ENCODE measurements at regions of chrX and their contacts with region 1.

Region 1: GRCh38 chrX:110146521-110146920 is 143.6 kb downstream of the TMEM164 start:
- DNase-seq: peak; percentile 42
- H3K4me3 ChIP-seq: no peak overlapping the region
- H3K27ac ChIP-seq: no peak overlapping the region
- H3K4me1 ChIP-seq: peaks cover 28% of the 10 kb centered on the region
- H3K27me3 ChIP-seq: no peaks in the 10 kb centered on the region
- CTCF ChIP-seq: peak; percentile 73 to 79

Region 2: DNA sequence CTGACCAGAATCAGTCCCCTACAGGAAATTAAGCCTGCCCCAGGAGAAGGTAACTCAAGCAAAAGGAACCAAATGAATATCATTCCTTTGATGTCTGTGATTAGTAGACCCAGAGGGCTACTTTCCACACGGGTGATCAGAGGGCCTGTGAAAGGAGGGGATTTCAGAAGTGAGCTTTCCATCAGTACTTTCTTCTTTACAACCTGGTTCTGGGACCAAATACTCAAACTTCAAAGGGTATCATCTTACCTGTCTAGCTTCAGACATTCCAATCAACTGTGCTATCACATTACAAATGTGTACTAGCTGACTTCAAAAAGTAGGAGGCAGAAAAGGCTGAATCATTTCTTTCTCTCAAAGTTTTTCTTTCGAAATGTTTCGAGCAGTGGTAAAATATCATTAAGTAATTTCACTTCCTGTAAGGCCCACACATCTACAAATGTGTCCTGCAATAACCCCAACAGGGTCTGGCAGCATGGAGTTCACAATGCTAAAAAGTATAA is 437.3 kb before region 1 on chrX:
- CTCF ChIA-PET with region 1: no interaction called
- dilution Hi-C with region 1: no loop called
- in situ Hi-C with region 1: loop called in 1 of 2 experiments (anchors 25 kb)
- intact Hi-C with region 1: no loop called
- DNase-seq: peak; percentile 66
- H3K4me3 ChIP-seq: no peak overlapping the region
- H3K27ac ChIP-seq: no peak overlapping the region
- H3K4me1 ChIP-seq: peaks cover 20% of the 10 kb centered on the region
- H3K27me3 ChIP-seq: no peaks in the 10 kb centered on the region
- CTCF ChIP-seq: no peak

Region 3: GRCh38 chrX:109902665-109903064 is 243.9 kb before region 1 on chrX:
- CTCF ChIA-PET with region 1: no interaction called
- dilution Hi-C with region 1: no loop called
- in situ Hi-C with region 1: loop called in 1 of 2 experiments (anchors 10 kb)
- intact Hi-C with region 1: no loop called
- DNase-seq: no peak
- H3K4me3 ChIP-seq: no peak overlapping the region
- H3K27ac ChIP-seq: no peak overlapping the region
- H3K4me1 ChIP-seq: no peaks in the 10 kb centered on the region
- H3K27me3 ChIP-seq: peaks cover 2% of the 10 kb centered on the region
- CTCF ChIP-seq: no peak

Region 4: GRCh38 chrX:109918753-109919152 is 227.8 kb before region 1 on chrX:
- CTCF ChIA-PET with region 1: no interaction called
- dilution Hi-C with region 1: no loop called
- in situ Hi-C with region 1: loop called in 1 of 2 experiments (anchors 5 kb)
- intact Hi-C with region 1: no loop called
- DNase-seq: no peak
- H3K4me3 ChIP-seq: no peak overlapping the region
- H3K27ac ChIP-seq: no peak overlapping the region
- H3K4me1 ChIP-seq: no peaks in the 10 kb centered on the region
- H3K27me3 ChIP-seq: peaks cover 4% of the 10 kb centered on the region
- CTCF ChIP-seq: no peak

Region 5: GRCh38 chrX:110002300-110003166 is 144.0 kb before region 1 on chrX and contains the start of gene TMEM164:
- CTCF ChIA-PET with region 1: no interaction called
- dilution Hi-C with region 1: no loop called
- in situ Hi-C with region 1: no loop called
- intact Hi-C with region 1: loop called (anchors 1 kb)
- DNase-seq: peak; percentile 77
- H3K4me3 ChIP-seq: peak within 1 kb of the TSS; percentile 53 to 76 (median 64)
- H3K27ac ChIP-seq: peak within 1 kb of the TSS; percentile 35
- H3K4me1 ChIP-seq: peaks cover 20% of the 10 kb centered on the region
- H3K27me3 ChIP-seq: peaks cover 1% of the 10 kb centered on the region
- CTCF ChIP-seq: no peak
- total RNA-seq, gene TMEM164: 8.3 to 19.1 TPM

Region 6: GRCh38 chrX:110046001-110046400 is 100.5 kb before region 1 on chrX:
- CTCF ChIA-PET with region 1: interaction called, 3 read pairs
- dilution Hi-C with region 1: no loop called
- in situ Hi-C with region 1: no loop called
- intact Hi-C with region 1: loop called (anchors 1 kb)
- DNase-seq: no peak
- H3K4me3 ChIP-seq: no peak overlapping the region
- H3K27ac ChIP-seq: no peak overlapping the region
- H3K4me1 ChIP-seq: no peaks in the 10 kb centered on the region
- H3K27me3 ChIP-seq: no peaks in the 10 kb centered on the region
- CTCF ChIP-seq: no peak

Region 7: DNA sequence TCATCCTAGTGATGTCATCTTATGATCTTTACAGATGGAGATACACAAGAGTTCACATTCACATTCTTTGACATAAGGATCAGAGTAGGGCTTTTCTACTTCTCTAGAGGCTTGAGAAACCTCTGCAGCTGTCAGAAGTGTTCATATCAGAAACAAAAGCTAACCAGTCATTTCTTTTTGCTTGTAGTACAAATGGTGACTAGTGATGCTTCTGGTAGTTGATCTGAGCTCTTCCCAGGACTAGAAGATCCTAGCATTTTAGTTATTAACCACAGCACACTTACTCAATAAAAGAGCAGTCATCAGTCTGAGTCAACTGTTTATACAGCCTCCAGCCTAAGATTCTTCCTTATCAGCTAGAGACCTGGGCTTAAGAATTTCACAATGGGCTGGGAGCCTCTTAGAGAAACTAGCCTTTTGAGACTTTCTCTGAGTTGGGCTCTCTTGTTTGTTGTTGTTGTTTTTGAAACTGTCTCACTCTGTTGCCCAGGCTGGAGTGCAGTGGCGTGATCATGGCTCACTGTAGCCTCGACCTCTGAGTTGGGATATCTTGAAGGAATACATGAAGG is 59.5 kb before region 1 on chrX:
- CTCF ChIA-PET with region 1: no interaction called
- dilution Hi-C with region 1: no loop called
- in situ Hi-C with region 1: no loop called
- intact Hi-C with region 1: loop called (anchors 2 kb)
- DNase-seq: peak; percentile 88
- H3K4me3 ChIP-seq: no peak overlapping the region
- H3K27ac ChIP-seq: peak overlapping the region; percentile 99
- H3K4me1 ChIP-seq: peaks cover 40% of the 10 kb centered on the region
- H3K27me3 ChIP-seq: no peaks in the 10 kb centered on the region
- CTCF ChIP-seq: no peak

Region 8: DNA sequence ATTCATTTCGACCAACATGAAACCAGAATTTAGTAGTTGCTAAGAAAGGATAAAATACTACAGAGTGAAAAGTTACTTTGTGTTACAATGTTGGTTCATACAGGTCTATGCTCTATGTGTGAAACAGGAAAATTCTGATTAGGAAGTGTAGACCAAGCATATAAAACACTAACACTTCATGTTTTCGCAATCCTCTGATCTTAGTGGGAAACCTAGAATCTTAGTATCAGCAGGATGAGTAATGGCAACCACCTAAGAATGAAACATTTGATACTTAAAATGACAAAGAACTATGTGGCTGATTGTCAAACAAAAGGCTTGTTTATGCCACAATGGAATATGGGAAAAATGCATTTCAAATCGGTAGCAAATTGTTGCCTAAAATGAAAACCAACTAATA is 55.3 kb after region 1 on chrX:
- CTCF ChIA-PET with region 1: no interaction called
- dilution Hi-C with region 1: no loop called
- in situ Hi-C with region 1: no loop called
- intact Hi-C with region 1: no loop called
- DNase-seq: peak; percentile 54
- H3K4me3 ChIP-seq: no peak overlapping the region
- H3K27ac ChIP-seq: no peak overlapping the region
- H3K4me1 ChIP-seq: peaks cover 7% of the 10 kb centered on the region
- H3K27me3 ChIP-seq: no peaks in the 10 kb centered on the region
- CTCF ChIP-seq: no peak